ENCODE measurements at regions of chr3 and their contacts with region 1.

Region 1: DNA sequence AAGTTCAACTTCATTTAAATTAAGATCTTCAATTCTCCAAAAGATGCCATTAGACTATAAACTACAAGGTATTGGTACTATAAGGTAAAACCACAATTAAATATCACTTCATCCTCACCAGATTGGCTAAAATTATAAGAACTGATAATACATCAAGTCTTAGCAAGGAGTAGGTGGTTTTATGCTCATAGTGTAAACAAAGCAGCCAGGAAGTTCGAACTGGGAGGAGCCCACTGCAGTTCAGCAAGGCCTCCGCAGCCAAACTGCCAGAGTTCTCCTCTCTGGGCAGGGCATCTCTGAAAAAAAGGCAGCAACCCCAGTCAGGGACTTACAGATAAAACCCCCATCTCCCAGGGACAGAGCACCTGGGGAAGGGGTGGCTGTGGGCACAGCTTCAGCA is 91.6 kb upstream of the SETMAR start:
- DNase-seq: no peak
- ATAC-seq: no peak
- H3K4me3 ChIP-seq: no peak overlapping the region
- H3K27ac ChIP-seq: no peak overlapping the region
- H3K4me1 ChIP-seq: no peaks in the 10 kb centered on the region
- H3K27me3 ChIP-seq: no peaks in the 10 kb centered on the region
- CTCF ChIP-seq: no peak

Region 2: DNA sequence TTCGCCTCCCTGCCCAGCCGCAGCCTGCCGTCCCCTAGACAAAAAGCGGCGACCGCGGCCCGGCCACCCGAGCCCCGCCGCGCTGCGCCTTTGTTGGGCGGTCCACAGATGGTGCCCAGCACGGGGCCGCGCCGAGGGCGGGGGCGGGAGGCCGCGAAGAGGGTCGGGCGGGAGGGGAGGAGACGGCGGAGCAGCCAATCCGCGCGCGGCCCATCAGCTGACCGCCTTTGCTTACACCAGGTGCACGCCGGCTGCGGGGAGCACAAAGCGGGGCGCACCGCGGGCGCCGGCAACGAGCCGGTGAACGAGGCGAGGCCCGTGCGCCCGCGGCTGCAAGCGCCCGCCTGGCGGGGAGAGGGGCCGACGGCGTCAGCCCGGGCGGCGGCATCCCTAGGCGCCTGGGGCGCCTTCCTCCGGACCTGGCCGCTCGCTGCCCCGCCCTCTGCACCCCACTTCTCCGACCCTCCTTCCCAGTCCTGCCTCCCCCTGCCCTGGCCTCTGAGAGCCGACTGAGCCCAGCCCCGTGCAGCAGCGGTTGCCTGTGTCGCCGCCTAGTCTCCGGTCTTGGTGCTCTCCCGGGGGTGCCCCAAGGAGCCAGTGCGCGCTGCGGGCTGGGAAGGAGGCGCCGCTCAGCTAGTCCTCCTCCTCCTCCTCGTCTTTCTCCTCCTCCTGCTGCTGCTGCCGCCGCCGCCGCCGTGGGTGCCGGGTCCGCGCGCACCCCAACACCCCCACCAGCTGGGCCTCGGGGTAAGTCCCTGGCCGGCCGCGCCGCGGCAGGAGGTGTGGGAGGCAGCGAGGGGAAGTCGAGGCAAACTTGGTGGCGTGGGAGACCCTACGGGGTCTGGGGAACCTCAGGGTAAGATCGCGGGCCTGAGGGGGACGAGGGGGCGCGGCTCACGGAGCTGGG is 412.2 kb before region 1 on chr3 and contains the start of gene LRRN1:
- intact Hi-C with region 1: no loop called
- DNase-seq: peak; percentile 14 to 34
- ATAC-seq: peak; percentile 47 to 81 (median 70)
- H3K4me3 ChIP-seq: peak within 1 kb of the TSS; percentile 12 to 66 (median 53)
- H3K27ac ChIP-seq: no peak within 1 kb of the TSS
- H3K4me1 ChIP-seq: peaks cover 0 to 33% (median 17%) of the 10 kb centered on the region in 9 donors
- H3K27me3 ChIP-seq: peaks cover 0 to 75% (median 54%) of the 10 kb centered on the region in 7 donors
- CTCF ChIP-seq: no peak
- total RNA-seq, gene LRRN1: 0.07 to 0.26 (median 0.11) TPM in 6 of 10 donors, not detected in the others

Region 3: DNA sequence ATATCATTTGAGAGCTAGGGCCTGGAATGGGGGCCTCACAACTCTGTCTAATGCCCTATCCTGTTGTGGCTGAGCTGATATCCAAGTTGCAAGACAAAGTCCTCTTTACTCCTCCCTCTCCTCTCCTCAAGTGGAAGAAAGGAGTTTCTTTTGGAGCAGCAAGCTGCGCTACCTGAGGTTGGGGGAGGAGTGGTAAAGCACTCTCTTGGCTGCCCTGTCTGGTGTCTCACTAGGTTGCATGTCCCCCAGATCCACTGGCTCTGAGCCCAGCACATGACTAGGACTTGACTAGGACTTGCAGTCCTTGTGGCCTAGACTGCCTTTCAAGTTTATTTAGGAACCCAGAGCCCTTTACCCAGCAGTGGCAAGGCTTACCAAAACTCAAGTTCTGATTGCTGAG is 49.5 kb before region 1 on chr3:
- intact Hi-C with region 1: loop called in 1 of 10 experiments (anchors 5 kb)
- DNase-seq: peak; percentile 5 to 13
- ATAC-seq: peak in 3 of 8 donors; percentile 61 to 80 (median 65)
- H3K4me3 ChIP-seq: no peak overlapping the region
- H3K27ac ChIP-seq: no peak overlapping the region
- H3K4me1 ChIP-seq: peaks cover 0 to 2% (median 0%) of the 10 kb centered on the region in 9 donors
- H3K27me3 ChIP-seq: no peaks in the 10 kb centered on the region
- CTCF ChIP-seq: no peak